GM12878 (cell line): ENCODE measurements at regions of chr9 and their contacts with region 1.

Region 1: GRCh38 chr9:7536310-7536939 is 263.2 kb downstream of the DMAC1 start:
- DNase-seq: no peak
- ATAC-seq: peak; percentile 98
- H3K4me3 ChIP-seq: no peak overlapping the region
- H3K27ac ChIP-seq: no peak overlapping the region
- H3K4me1 ChIP-seq: no peaks in the 10 kb centered on the region
- H3K27me3 ChIP-seq: no peaks in the 10 kb centered on the region
- CTCF ChIP-seq: peak; percentile 63 to 79 (median 76)
- EP300 ChIP-seq: no peak
- POLR2A ChIP-seq: no peak
- RAD21 ChIP-seq: peak; percentile 79

Region 2: GRCh38 chr9:6827439-6827838 is 709.0 kb before region 1 on chr9:
- CTCF ChIA-PET with region 1: interaction called, 5 read pairs
- POLR2A ChIA-PET with region 1: no interaction called
- RAD21 ChIA-PET with region 1: interaction called, 4 read pairs
- SMC1A ChIA-PET with region 1: interaction called, 3 read pairs
- in situ Hi-C with region 1: no loop called
- intact Hi-C with region 1: loop called (anchors 2 kb)
- DNase-seq: peak; percentile 16
- ATAC-seq: peak; percentile 81
- H3K4me3 ChIP-seq: no peak overlapping the region
- H3K27ac ChIP-seq: no peak overlapping the region
- H3K4me1 ChIP-seq: no peaks in the 10 kb centered on the region
- H3K27me3 ChIP-seq: no peaks in the 10 kb centered on the region
- CTCF ChIP-seq: peak; percentile 36 to 60 (median 47); a peak in 5 of 6 replicates
- EP300 ChIP-seq: no peak
- POLR2A ChIP-seq: no peak
- RAD21 ChIP-seq: peak; percentile 82

Region 3: GRCh38 chr9:6907772-6908381 is 628.5 kb before region 1 on chr9:
- CTCF ChIA-PET with region 1: no interaction called
- POLR2A ChIA-PET with region 1: no interaction called
- RAD21 ChIA-PET with region 1: interaction called, 3 read pairs
- SMC1A ChIA-PET with region 1: no interaction called
- in situ Hi-C with region 1: loop called (anchors 25 kb)
- intact Hi-C with region 1: loop called (anchors 5 kb)
- DNase-seq: no peak
- ATAC-seq: 0 out of 3 replicates have a peak, but pooled peaks have one; percentile 17
- H3K4me3 ChIP-seq: no peak overlapping the region
- H3K27ac ChIP-seq: no peak overlapping the region
- H3K4me1 ChIP-seq: no peaks in the 10 kb centered on the region
- H3K27me3 ChIP-seq: no peaks in the 10 kb centered on the region
- CTCF ChIP-seq: peak; percentile 35 to 47 (median 42); a peak in 4 of 6 replicates
- EP300 ChIP-seq: no peak
- POLR2A ChIP-seq: no peak
- RAD21 ChIP-seq: peak; percentile 66

Region 4: DNA sequence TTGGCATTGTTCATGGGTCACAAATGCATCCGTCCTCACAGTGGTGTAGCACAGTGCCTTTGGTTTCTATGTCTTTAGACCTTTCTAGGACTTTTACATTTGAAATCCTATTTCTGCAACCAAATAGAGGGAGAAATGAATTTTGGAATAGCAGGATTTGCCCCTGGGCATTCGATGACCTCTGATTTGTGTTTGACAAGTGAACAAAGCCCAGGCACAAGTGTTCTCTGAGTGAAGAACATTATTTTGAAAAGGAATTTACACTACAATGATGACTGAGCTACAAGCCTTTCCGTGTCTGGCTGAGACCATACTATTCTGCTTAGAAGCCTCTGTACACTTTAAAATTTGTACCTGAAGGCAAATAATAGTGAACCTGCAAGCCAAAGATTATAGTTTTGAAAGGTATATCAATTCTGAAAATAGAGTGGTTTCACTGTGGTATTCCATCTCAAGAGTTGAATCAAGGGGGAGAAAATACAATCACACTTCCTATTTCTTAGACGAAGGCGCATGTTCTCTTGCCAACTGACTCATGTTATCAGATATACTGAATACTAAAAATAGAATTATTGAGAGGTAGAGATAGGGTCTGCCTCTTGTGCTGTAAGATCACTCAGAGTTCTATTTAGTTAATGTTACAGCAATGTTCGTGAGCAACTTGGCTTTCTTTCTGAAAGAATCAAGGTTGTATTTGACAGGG is 481.1 kb before region 1 on chr9:
- CTCF ChIA-PET with region 1: interaction called, 17 read pairs
- POLR2A ChIA-PET with region 1: no interaction called
- RAD21 ChIA-PET with region 1: interaction called, 8 read pairs
- SMC1A ChIA-PET with region 1: interaction called, 13 read pairs
- in situ Hi-C with region 1: loop called (anchors 5 kb)
- intact Hi-C with region 1: loop called (anchors 1 kb)
- DNase-seq: peak; percentile 17
- ATAC-seq: peak; percentile 72
- H3K4me3 ChIP-seq: no peak overlapping the region
- H3K27ac ChIP-seq: no peak overlapping the region
- H3K4me1 ChIP-seq: peaks cover 11% of the 10 kb centered on the region
- H3K27me3 ChIP-seq: no peaks in the 10 kb centered on the region
- CTCF ChIP-seq: no peak
- EP300 ChIP-seq: no peak
- POLR2A ChIP-seq: no peak
- RAD21 ChIP-seq: no peak

Region 5: GRCh38 chr9:7273391-7273974 is 262.9 kb before region 1 on chr9:
- CTCF ChIA-PET with region 1: interaction called, 7 read pairs
- POLR2A ChIA-PET with region 1: no interaction called
- RAD21 ChIA-PET with region 1: interaction called, 3 read pairs
- SMC1A ChIA-PET with region 1: interaction called, 4 read pairs
- in situ Hi-C with region 1: no loop called
- intact Hi-C with region 1: loop called (anchors 2 kb)
- DNase-seq: no peak
- ATAC-seq: 0 out of 3 replicates have a peak, but pooled peaks have one; percentile 34
- H3K4me3 ChIP-seq: no peak overlapping the region
- H3K27ac ChIP-seq: no peak overlapping the region
- H3K4me1 ChIP-seq: no peaks in the 10 kb centered on the region
- H3K27me3 ChIP-seq: peaks cover 0 to 4% of the 10 kb centered on the region in 2 experiments; a peak in 1 of 4 replicates
- CTCF ChIP-seq: peak; percentile 18 to 33 (median 22); a peak in 3 of 6 replicates
- EP300 ChIP-seq: no peak
- POLR2A ChIP-seq: no peak
- RAD21 ChIP-seq: peak; percentile 50

Region 6: GRCh38 chr9:7405924-7406604 is 130.4 kb before region 1 on chr9:
- CTCF ChIA-PET with region 1: interaction called, 10 read pairs
- POLR2A ChIA-PET with region 1: no interaction called
- RAD21 ChIA-PET with region 1: interaction called, 3 read pairs
- SMC1A ChIA-PET with region 1: interaction called, 6 read pairs
- in situ Hi-C with region 1: no loop called
- intact Hi-C with region 1: loop called (anchors 2 kb)
- DNase-seq: no peak
- ATAC-seq: peak; percentile 82
- H3K4me3 ChIP-seq: no peak overlapping the region
- H3K27ac ChIP-seq: no peak overlapping the region
- H3K4me1 ChIP-seq: peaks cover 7% of the 10 kb centered on the region; the same call in 1 of the 2 replicates
- H3K27me3 ChIP-seq: no peaks in the 10 kb centered on the region; a peak in 1 of 4 replicates
- CTCF ChIP-seq: no peak
- EP300 ChIP-seq: peak in 1 of 2 experiments; percentile 26; a peak in 1 of 4 replicates
- POLR2A ChIP-seq: no peak
- RAD21 ChIP-seq: no peak

Region 7: GRCh38 chr9:7570107-7570720 is 33.8 kb after region 1 on chr9:
- CTCF ChIA-PET with region 1: interaction called, 11 read pairs
- POLR2A ChIA-PET with region 1: no interaction called
- RAD21 ChIA-PET with region 1: no interaction called
- SMC1A ChIA-PET with region 1: no interaction called
- in situ Hi-C with region 1: no loop called
- intact Hi-C with region 1: no loop called
- DNase-seq: peak; percentile 30
- ATAC-seq: peak; percentile 93
- H3K4me3 ChIP-seq: no peak overlapping the region
- H3K27ac ChIP-seq: no peak overlapping the region
- H3K4me1 ChIP-seq: no peaks in the 10 kb centered on the region
- H3K27me3 ChIP-seq: no peaks in the 10 kb centered on the region; a peak in 2 of 4 replicates
- CTCF ChIP-seq: peak; percentile 82 to 86 (median 84)
- EP300 ChIP-seq: no peak
- POLR2A ChIP-seq: no peak
- RAD21 ChIP-seq: peak; percentile 92

Region 8: GRCh38 chr9:7640231-7640630 is 103.8 kb after region 1 on chr9:
- CTCF ChIA-PET with region 1: no interaction called
- POLR2A ChIA-PET with region 1: no interaction called
- RAD21 ChIA-PET with region 1: no interaction called
- SMC1A ChIA-PET with region 1: no interaction called
- in situ Hi-C with region 1: no loop called
- intact Hi-C with region 1: no loop called
- DNase-seq: no peak
- ATAC-seq: no peak
- H3K4me3 ChIP-seq: no peak overlapping the region
- H3K27ac ChIP-seq: no peak overlapping the region
- H3K4me1 ChIP-seq: no peaks in the 10 kb centered on the region
- H3K27me3 ChIP-seq: no peaks in the 10 kb centered on the region
- CTCF ChIP-seq: no peak
- EP300 ChIP-seq: no peak
- POLR2A ChIP-seq: no peak
- RAD21 ChIP-seq: no peak